ENCODE measurements at regions of chr1 and their contacts with region 1.

Region 1: GRCh38 chr1:85607126-85607912 is 26.8 kb downstream of the CCN1 start:
- DNase-seq: peak; percentile 100
- H3K4me3 ChIP-seq: no peak overlapping the region
- CTCF ChIP-seq: no peak

Region 2: GRCh38 chr1:85692730-85693314 is 85.5 kb after region 1 on chr1:
- in situ Hi-C with region 1: loop called (anchors 5 kb)
- DNase-seq: peak; percentile 67
- H3K4me3 ChIP-seq: no peak overlapping the region
- CTCF ChIP-seq: no peak